ENCODE measurements at regions of chr6 and their contacts with region 1.

Region 1: DNA sequence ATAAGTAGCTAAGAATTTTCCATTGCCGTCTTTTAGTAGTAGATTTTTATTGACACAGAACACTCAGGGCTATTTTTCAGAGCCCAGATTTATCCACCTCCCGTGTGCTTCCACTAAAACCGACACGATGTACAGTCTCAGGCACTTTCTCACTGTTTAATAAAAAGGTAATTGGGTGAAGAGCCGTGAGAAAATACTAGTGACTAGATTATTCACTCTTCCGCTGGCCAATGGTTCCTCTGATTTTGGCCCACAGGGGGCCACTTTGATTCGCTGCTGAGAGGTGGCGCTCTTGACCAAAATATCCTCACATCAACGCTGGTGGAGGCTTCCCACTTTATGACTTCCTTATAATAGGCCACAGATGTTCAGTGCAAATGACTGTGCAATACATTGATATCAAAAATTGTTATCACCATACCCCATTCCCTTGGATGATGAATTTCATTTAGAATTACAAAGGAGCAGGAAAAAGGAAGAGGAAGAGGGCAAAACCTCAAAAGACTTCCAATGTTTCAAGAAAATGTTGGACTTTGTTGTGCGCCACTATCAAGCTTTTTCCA is 12.3 kb upstream of the HDDC2 start:
- DNase-seq: no peak
- ATAC-seq: peak; percentile 97
- H3K4me3 ChIP-seq: no peak overlapping the region
- H3K27ac ChIP-seq: no peak overlapping the region
- H3K4me1 ChIP-seq: no peaks in the 10 kb centered on the region
- H3K27me3 ChIP-seq: no peaks in the 10 kb centered on the region
- CTCF ChIP-seq: peak; percentile 76 to 95 (median 88)
- EP300 ChIP-seq: no peak
- POLR2A ChIP-seq: no peak
- RAD21 ChIP-seq: peak; percentile 96

Region 2: GRCh38 chr6:125294036-125294435 is 20.1 kb before region 1 on chr6:
- CTCF ChIA-PET with region 1: interaction called, 12 read pairs
- POLR2A ChIA-PET with region 1: no interaction called
- RAD21 ChIA-PET with region 1: interaction called, 3 read pairs
- SMC1A ChIA-PET with region 1: interaction called, 5 read pairs
- in situ Hi-C with region 1: no loop called
- intact Hi-C with region 1: no loop called
- DNase-seq: no peak
- ATAC-seq: no peak
- H3K4me3 ChIP-seq: no peak overlapping the region
- H3K27ac ChIP-seq: no peak overlapping the region
- H3K4me1 ChIP-seq: no peaks in the 10 kb centered on the region
- H3K27me3 ChIP-seq: no peaks in the 10 kb centered on the region
- CTCF ChIP-seq: no peak
- EP300 ChIP-seq: no peak
- POLR2A ChIP-seq: no peak
- RAD21 ChIP-seq: no peak

Region 3: GRCh38 chr6:125340991-125341390 is 26.9 kb after region 1 on chr6:
- CTCF ChIA-PET with region 1: interaction called, 12 read pairs
- POLR2A ChIA-PET with region 1: no interaction called
- RAD21 ChIA-PET with region 1: interaction called, 4 read pairs
- SMC1A ChIA-PET with region 1: interaction called, 3 read pairs
- in situ Hi-C with region 1: no loop called
- intact Hi-C with region 1: no loop called
- DNase-seq: no peak
- ATAC-seq: no peak
- H3K4me3 ChIP-seq: no peak overlapping the region
- H3K27ac ChIP-seq: no peak overlapping the region
- H3K4me1 ChIP-seq: peaks cover 3% of the 10 kb centered on the region; the same call in 1 of the 2 replicates
- H3K27me3 ChIP-seq: no peaks in the 10 kb centered on the region
- CTCF ChIP-seq: no peak
- EP300 ChIP-seq: no peak
- POLR2A ChIP-seq: no peak
- RAD21 ChIP-seq: no peak

Region 4: GRCh38 chr6:125421853-125422252 is 107.8 kb after region 1 on chr6:
- CTCF ChIA-PET with region 1: no interaction called
- POLR2A ChIA-PET with region 1: no interaction called
- RAD21 ChIA-PET with region 1: no interaction called
- SMC1A ChIA-PET with region 1: no interaction called
- in situ Hi-C with region 1: no loop called
- intact Hi-C with region 1: no loop called
- DNase-seq: no peak
- ATAC-seq: no peak
- H3K4me3 ChIP-seq: no peak overlapping the region
- H3K27ac ChIP-seq: no peak overlapping the region
- H3K4me1 ChIP-seq: no peaks in the 10 kb centered on the region
- H3K27me3 ChIP-seq: no peaks in the 10 kb centered on the region; a peak in 1 of 4 replicates
- CTCF ChIP-seq: no peak
- EP300 ChIP-seq: no peak
- POLR2A ChIP-seq: no peak
- RAD21 ChIP-seq: no peak

Region 5: GRCh38 chr6:125570526-125570925 is 256.4 kb after region 1 on chr6:
- CTCF ChIA-PET with region 1: no interaction called
- POLR2A ChIA-PET with region 1: no interaction called
- RAD21 ChIA-PET with region 1: no interaction called
- SMC1A ChIA-PET with region 1: no interaction called
- in situ Hi-C with region 1: no loop called
- intact Hi-C with region 1: no loop called
- DNase-seq: no peak
- ATAC-seq: no peak
- H3K4me3 ChIP-seq: no peak overlapping the region
- H3K27ac ChIP-seq: no peak overlapping the region
- H3K4me1 ChIP-seq: no peaks in the 10 kb centered on the region
- H3K27me3 ChIP-seq: peaks cover 0 to 3% of the 10 kb centered on the region in 2 experiments; a peak in 2 of 4 replicates
- CTCF ChIP-seq: no peak
- EP300 ChIP-seq: no peak
- POLR2A ChIP-seq: no peak
- RAD21 ChIP-seq: no peak

Region 6: DNA sequence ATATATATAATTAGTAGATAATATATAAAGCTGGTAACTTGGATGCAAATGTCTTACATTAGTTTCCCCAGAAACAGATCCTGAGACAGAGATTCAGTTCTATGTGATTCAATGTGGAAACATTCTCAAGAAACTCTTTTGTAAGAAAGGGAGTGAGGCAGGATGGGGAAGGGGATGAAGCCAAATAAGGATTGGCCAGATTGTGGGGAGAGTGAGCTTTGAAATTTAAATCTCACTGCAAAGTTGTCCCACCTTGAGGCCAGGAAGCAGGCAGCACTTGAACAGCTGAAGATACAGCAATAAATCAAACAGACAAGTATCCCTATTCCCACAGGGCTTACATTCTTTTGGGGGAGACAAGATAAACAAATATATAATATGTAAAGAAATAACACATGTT is 309.0 kb after region 1 on chr6:
- CTCF ChIA-PET with region 1: no interaction called
- POLR2A ChIA-PET with region 1: no interaction called
- RAD21 ChIA-PET with region 1: no interaction called
- SMC1A ChIA-PET with region 1: no interaction called
- in situ Hi-C with region 1: no loop called
- intact Hi-C with region 1: loop called (anchors 5 kb)
- DNase-seq: no peak
- ATAC-seq: no peak
- H3K4me3 ChIP-seq: no peak overlapping the region
- H3K27ac ChIP-seq: no peak overlapping the region
- H3K4me1 ChIP-seq: no peaks in the 10 kb centered on the region
- H3K27me3 ChIP-seq: peaks cover 0 to 2% of the 10 kb centered on the region in 2 experiments; a peak in 1 of 4 replicates
- CTCF ChIP-seq: no peak
- EP300 ChIP-seq: no peak
- POLR2A ChIP-seq: no peak
- RAD21 ChIP-seq: no peak

Region 7: DNA sequence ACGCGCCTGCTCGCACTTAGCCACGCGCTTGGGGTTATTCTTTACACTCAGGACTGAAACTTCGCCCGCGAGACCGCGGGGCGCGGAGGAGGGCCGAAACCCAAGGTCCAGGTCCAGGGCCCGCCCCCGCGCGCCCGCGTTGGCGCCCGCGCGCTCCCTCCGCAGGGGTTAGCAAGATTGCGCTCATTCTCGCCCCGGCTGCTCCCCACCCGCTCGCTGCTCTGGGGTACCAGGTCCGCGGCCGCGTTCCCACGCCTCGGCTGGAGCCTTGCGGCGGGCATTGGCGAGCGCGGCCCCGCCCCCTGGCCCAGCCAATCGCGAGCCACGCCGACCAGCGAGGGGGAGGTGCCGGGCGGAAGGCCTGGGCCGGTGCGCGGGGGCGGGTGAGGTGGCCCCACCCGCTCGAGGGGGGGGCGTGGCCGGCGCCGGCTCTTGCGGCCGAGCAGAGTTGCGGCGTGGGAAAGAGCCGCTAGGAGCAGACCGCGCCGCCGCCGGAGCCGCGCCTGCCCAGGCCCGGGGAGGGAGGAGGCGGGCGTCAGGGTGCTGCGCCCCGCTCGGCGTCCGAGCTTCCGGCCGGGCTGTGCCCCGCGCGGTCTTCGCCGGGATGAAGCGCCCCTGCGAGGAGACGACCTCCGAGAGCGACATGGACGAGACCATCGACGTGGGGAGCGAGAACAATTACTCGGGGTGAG is 435.2 kb after region 1 on chr6 and contains the start of gene HEY2:
- CTCF ChIA-PET with region 1: interaction called, 306 read pairs
- POLR2A ChIA-PET with region 1: interaction called, 6 read pairs
- RAD21 ChIA-PET with region 1: interaction called, 134 read pairs
- SMC1A ChIA-PET with region 1: interaction called, 128 read pairs
- in situ Hi-C with region 1: no loop called
- intact Hi-C with region 1: loop called (anchors 1 kb)
- DNase-seq: peak; percentile 33
- ATAC-seq: peak; percentile 96
- H3K4me3 ChIP-seq: peak within 1 kb of the TSS; percentile 71
- H3K27ac ChIP-seq: no peak within 1 kb of the TSS
- H3K4me1 ChIP-seq: peaks cover 9% of the 10 kb centered on the region
- H3K27me3 ChIP-seq: peaks cover 5 to 6% of the 10 kb centered on the region in 2 experiments; a peak in 3 of 4 replicates
- CTCF ChIP-seq: no peak
- EP300 ChIP-seq: no peak
- POLR2A ChIP-seq: peak; percentile 56; the same call in 1 of the 2 replicates
- RAD21 ChIP-seq: no peak
- polyA plus RNA-seq, gene HEY2: not detected

Region 8: GRCh38 chr6:125773387-125774341 is 459.6 kb after region 1 on chr6:
- CTCF ChIA-PET with region 1: interaction called, 116 read pairs
- POLR2A ChIA-PET with region 1: interaction called, 7 read pairs
- RAD21 ChIA-PET with region 1: interaction called, 6 read pairs
- SMC1A ChIA-PET with region 1: interaction called, 5 read pairs
- in situ Hi-C with region 1: loop called (anchors 5 kb)
- intact Hi-C with region 1: loop called (anchors 1 kb)
- DNase-seq: no peak
- ATAC-seq: peak; percentile 75
- H3K4me3 ChIP-seq: no peak overlapping the region
- H3K27ac ChIP-seq: no peak overlapping the region
- H3K4me1 ChIP-seq: no peaks in the 10 kb centered on the region
- H3K27me3 ChIP-seq: no peaks in the 10 kb centered on the region; a peak in 1 of 4 replicates
- CTCF ChIP-seq: no peak
- EP300 ChIP-seq: no peak
- POLR2A ChIP-seq: no peak
- RAD21 ChIP-seq: no peak

Region 9: DNA sequence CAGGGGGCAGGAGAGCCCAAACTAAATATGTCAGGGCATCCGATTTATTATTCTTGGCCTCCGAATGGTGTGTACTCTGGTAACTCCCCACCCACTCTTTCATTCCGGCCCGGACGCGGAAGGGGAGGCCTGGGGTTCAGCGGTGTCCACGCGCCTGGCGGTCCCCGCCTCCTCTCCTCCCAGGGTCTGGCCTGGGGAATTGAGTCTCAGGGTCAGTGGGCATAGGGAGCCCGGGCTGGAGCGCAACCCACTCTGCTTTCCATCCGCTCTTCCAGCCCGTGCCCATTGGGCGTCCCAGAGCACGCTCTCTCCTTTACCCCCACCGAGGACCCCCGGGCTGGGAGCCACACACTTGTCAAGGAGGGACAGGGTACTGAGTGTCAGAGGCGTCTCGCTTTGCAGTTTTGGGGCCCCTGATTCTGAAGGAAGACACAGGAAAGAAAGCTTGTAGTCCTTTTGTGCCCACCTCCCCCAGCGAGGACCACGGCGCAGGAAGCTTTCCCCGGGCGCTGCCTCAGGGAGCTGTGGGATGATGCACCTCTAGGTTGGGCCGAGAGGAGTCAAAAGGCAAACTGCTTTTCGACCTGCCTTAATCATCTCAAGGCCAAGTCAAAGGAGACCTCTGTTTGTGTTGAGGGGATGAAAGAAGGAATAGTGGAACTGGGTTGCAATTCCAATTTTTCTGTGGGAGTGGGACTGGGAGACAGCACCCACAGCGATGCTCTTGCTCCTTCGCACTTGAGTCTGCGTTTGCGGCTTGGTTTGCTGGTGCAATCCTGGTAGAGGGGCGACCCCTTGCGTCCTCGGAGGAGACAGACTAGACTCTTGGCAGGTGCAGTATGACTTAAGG is 1806.9 kb after region 1 on chr6:
- CTCF ChIA-PET with region 1: no interaction called
- POLR2A ChIA-PET with region 1: no interaction called
- RAD21 ChIA-PET with region 1: no interaction called
- SMC1A ChIA-PET with region 1: no interaction called
- in situ Hi-C with region 1: no loop called
- intact Hi-C with region 1: loop called (anchors 5 kb)
- DNase-seq: peak; percentile 24
- ATAC-seq: peak; percentile 90
- H3K4me3 ChIP-seq: no peak overlapping the region
- H3K27ac ChIP-seq: no peak overlapping the region
- H3K4me1 ChIP-seq: peaks cover 5% of the 10 kb centered on the region
- H3K27me3 ChIP-seq: peaks cover 9 to 24% of the 10 kb centered on the region in 2 experiments
- CTCF ChIP-seq: peak; percentile 81 to 96 (median 85)
- EP300 ChIP-seq: no peak
- POLR2A ChIP-seq: no peak
- RAD21 ChIP-seq: peak; percentile 97

Measured in GM12878 (cell line).